ENCODE measurements at regions of chr6 and their contacts with region 1.

Region 1: DNA sequence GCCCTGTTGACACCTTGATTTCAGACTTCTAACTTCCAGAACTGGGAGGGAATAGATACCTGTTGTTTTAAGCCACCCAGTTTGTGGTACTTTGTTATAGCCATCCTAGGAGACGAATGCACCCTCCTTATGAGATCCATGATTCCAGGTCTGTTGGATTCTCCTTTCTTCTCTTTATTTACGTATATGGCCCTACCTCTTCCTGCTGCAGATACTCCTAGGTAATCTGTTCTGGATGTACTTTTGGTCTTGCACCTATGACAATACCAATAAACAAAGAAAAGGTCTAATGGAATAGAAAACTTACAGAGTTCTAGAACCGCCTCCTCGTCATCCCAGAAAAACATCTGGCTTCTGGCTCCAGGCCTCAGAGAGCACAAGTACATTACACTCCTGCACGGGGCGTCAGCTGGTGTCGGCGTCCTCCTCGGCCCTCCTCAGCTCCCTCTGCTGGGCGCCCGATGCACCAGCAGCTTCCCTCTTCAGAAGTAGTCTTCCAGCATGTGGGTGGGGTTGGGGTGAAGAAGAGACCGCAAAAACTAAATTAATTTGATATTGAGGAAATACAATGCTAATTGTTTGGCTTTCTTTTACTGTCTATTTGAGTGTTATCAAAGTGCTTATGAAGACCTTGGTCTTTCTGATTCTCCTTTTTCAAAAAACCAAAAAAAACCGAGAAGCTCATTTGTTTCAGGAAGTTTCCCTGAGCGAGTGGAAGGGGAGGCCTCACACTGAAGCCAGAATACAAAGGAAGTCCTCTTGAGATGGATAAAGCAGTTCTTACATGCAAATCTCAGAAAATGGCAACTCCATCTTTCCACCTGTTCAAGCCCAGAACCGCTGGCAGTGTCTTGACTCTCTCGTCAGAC is 9.7 kb upstream of the ATXN1 start:
- DNase-seq: peak; percentile 81
- ATAC-seq: peak; percentile 97
- H3K4me3 ChIP-seq: no peak overlapping the region
- H3K4me3 Mint-ChIP-seq: no peak overlapping the region
- H3K27ac ChIP-seq: no peak overlapping the region
- H3K27ac Mint-ChIP-seq: no peak overlapping the region
- H3K4me1 ChIP-seq: peaks cover 4 to 11% of the 10 kb centered on the region in 2 donors
- H3K4me1 Mint-ChIP-seq: peaks cover 19% of the 10 kb centered on the region
- H3K27me3 ChIP-seq: peaks cover 0 to 4% (median 0%) of the 10 kb centered on the region in 4 experiments
- H3K27me3 Mint-ChIP-seq: peaks cover 8% of the 10 kb centered on the region
- CTCF ChIP-seq: peak; percentile 97

Region 2: DNA sequence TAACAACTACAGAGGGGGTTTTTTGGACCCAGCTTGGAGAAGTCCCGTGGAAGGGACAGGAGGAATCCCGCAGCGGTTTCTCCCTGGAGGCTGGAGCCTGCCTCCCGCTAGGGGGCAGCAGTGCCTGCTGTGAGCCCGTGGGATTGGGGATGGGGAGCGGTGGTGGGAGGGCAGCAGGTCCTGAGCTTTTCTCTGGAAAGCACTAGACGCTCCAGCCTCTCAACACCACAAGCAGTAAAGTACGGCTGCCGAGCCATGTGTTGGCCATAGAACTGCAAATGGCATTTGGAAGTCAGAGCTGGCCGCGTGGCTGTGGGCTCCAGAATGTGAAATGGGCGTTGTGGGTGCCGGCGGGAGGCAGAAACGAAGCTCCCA is 484.8 kb before region 1 on chr6:
- CTCF ChIA-PET with region 1: interaction called, 11 read pairs
- POLR2A ChIA-PET with region 1: no interaction called
- intact Hi-C with region 1: no loop called
- DNase-seq: peak; percentile 22
- ATAC-seq: no peak
- H3K4me3 ChIP-seq: no peak overlapping the region
- H3K4me3 Mint-ChIP-seq: no peak overlapping the region
- H3K27ac ChIP-seq: no peak overlapping the region
- H3K27ac Mint-ChIP-seq: no peak overlapping the region
- H3K4me1 ChIP-seq: no peaks in the 10 kb centered on the region
- H3K4me1 Mint-ChIP-seq: no peaks in the 10 kb centered on the region
- H3K27me3 ChIP-seq: no peaks in the 10 kb centered on the region
- H3K27me3 Mint-ChIP-seq: peaks cover 8% of the 10 kb centered on the region
- CTCF ChIP-seq: peak; percentile 47

Region 3: DNA sequence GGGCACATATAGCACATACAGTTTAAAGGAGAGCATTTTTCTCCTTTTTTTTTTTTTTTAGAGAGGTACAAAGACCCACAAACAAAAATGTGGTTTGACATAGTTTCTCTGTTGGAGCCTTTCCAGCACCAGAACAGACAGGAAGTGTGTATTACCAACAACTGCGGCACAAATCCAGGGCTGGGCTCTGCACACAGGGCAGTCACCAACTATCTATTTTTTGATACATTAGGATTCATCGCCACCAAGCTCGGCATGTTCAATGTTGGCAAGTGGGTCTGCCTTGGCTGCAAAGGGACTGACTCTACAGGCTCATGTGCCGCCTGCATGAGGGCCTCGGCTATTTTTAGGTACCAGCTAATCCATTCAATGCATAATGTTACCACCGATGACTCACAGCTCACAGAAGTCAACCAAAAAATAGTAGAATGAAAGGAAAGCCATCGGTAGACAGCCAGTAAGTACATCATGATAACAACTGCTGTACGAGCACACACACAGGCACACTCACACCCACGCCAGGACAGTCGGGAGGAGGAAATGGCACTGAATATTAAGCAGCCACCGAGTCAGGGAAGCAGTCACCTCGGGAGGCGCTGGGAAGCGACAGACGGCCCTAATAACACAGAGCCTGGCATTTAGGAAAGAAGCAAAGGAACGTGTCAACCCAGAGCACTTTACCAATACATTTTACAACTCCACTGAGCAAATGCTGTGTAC is 451.0 kb before region 1 on chr6:
- CTCF ChIA-PET with region 1: interaction called, 20 read pairs
- POLR2A ChIA-PET with region 1: no interaction called
- intact Hi-C with region 1: no loop called
- DNase-seq: peak; percentile 52
- ATAC-seq: peak; percentile 57
- H3K4me3 ChIP-seq: peak overlapping the region in 1 of 5 experiments; percentile 33
- H3K4me3 Mint-ChIP-seq: peak overlapping the region; percentile 53
- H3K27ac ChIP-seq: peak overlapping the region; percentile 6 to 23
- H3K27ac Mint-ChIP-seq: peak overlapping the region; percentile 62
- H3K4me1 ChIP-seq: peaks cover 17 to 34% of the 10 kb centered on the region in 2 donors
- H3K4me1 Mint-ChIP-seq: peaks cover 44% of the 10 kb centered on the region
- H3K27me3 ChIP-seq: no peaks in the 10 kb centered on the region
- H3K27me3 Mint-ChIP-seq: no peaks in the 10 kb centered on the region
- CTCF ChIP-seq: no peak

Region 4: GRCh38 chr6:16338577-16339262 is 432.2 kb before region 1 on chr6:
- CTCF ChIA-PET with region 1: interaction called, 20 read pairs
- POLR2A ChIA-PET with region 1: no interaction called
- intact Hi-C with region 1: no loop called
- DNase-seq: no peak
- ATAC-seq: no peak
- H3K4me3 ChIP-seq: no peak overlapping the region
- H3K4me3 Mint-ChIP-seq: no peak overlapping the region
- H3K27ac ChIP-seq: no peak overlapping the region
- H3K27ac Mint-ChIP-seq: no peak overlapping the region
- H3K4me1 ChIP-seq: no peaks in the 10 kb centered on the region
- H3K4me1 Mint-ChIP-seq: peaks cover 6% of the 10 kb centered on the region
- H3K27me3 ChIP-seq: no peaks in the 10 kb centered on the region
- H3K27me3 Mint-ChIP-seq: no peaks in the 10 kb centered on the region
- CTCF ChIP-seq: no peak

Region 5: DNA sequence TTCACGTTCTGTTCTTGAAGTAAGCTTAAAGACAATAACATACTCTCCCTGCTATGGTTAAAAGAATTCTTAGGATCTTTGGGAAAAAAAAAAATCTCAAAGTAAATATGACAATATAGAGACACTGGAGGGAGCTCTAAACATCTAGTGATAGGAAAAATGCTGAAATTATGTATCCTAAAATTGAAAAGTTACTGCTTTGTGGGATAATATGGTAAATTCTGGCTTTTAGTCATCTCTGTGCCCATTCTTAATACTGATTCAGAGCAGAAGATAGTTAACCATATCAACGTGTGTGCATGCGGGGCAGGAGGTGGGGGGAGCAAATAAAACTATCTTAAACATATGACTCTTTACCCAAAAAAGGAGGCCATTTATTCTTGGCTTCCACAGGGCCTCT is 367.1 kb before region 1 on chr6:
- CTCF ChIA-PET with region 1: interaction called, 10 read pairs
- POLR2A ChIA-PET with region 1: no interaction called
- intact Hi-C with region 1: no loop called
- DNase-seq: no peak
- ATAC-seq: no peak
- H3K4me3 ChIP-seq: no peak overlapping the region
- H3K4me3 Mint-ChIP-seq: no peak overlapping the region
- H3K27ac ChIP-seq: no peak overlapping the region
- H3K27ac Mint-ChIP-seq: no peak overlapping the region
- H3K4me1 ChIP-seq: peaks cover 10 to 26% of the 10 kb centered on the region in 2 donors
- H3K4me1 Mint-ChIP-seq: peaks cover 38% of the 10 kb centered on the region
- H3K27me3 ChIP-seq: no peaks in the 10 kb centered on the region
- H3K27me3 Mint-ChIP-seq: no peaks in the 10 kb centered on the region
- CTCF ChIP-seq: no peak

Region 6: GRCh38 chr6:16514249-16514648 is 256.7 kb before region 1 on chr6:
- CTCF ChIA-PET with region 1: interaction called, 19 read pairs
- POLR2A ChIA-PET with region 1: no interaction called
- intact Hi-C with region 1: loop called (anchors 2 kb)
- DNase-seq: peak; percentile 42
- ATAC-seq: peak; percentile 47
- H3K4me3 ChIP-seq: no peak overlapping the region
- H3K4me3 Mint-ChIP-seq: no peak overlapping the region
- H3K27ac ChIP-seq: no peak overlapping the region
- H3K27ac Mint-ChIP-seq: peak overlapping the region; percentile 33
- H3K4me1 ChIP-seq: peaks cover 4 to 36% of the 10 kb centered on the region in 2 donors
- H3K4me1 Mint-ChIP-seq: peaks cover 42% of the 10 kb centered on the region
- H3K27me3 ChIP-seq: no peaks in the 10 kb centered on the region
- H3K27me3 Mint-ChIP-seq: no peaks in the 10 kb centered on the region
- CTCF ChIP-seq: peak; percentile 50

Region 7: GRCh38 chr6:16533721-16534136 is 237.2 kb before region 1 on chr6:
- CTCF ChIA-PET with region 1: no interaction called
- POLR2A ChIA-PET with region 1: no interaction called
- intact Hi-C with region 1: no loop called
- DNase-seq: no peak
- ATAC-seq: no peak
- H3K4me3 ChIP-seq: no peak overlapping the region
- H3K4me3 Mint-ChIP-seq: no peak overlapping the region
- H3K27ac ChIP-seq: no peak overlapping the region
- H3K27ac Mint-ChIP-seq: no peak overlapping the region
- H3K4me1 ChIP-seq: no peaks in the 10 kb centered on the region
- H3K4me1 Mint-ChIP-seq: peaks cover 8% of the 10 kb centered on the region
- H3K27me3 ChIP-seq: no peaks in the 10 kb centered on the region
- H3K27me3 Mint-ChIP-seq: no peaks in the 10 kb centered on the region
- CTCF ChIP-seq: no peak

Region 8: DNA sequence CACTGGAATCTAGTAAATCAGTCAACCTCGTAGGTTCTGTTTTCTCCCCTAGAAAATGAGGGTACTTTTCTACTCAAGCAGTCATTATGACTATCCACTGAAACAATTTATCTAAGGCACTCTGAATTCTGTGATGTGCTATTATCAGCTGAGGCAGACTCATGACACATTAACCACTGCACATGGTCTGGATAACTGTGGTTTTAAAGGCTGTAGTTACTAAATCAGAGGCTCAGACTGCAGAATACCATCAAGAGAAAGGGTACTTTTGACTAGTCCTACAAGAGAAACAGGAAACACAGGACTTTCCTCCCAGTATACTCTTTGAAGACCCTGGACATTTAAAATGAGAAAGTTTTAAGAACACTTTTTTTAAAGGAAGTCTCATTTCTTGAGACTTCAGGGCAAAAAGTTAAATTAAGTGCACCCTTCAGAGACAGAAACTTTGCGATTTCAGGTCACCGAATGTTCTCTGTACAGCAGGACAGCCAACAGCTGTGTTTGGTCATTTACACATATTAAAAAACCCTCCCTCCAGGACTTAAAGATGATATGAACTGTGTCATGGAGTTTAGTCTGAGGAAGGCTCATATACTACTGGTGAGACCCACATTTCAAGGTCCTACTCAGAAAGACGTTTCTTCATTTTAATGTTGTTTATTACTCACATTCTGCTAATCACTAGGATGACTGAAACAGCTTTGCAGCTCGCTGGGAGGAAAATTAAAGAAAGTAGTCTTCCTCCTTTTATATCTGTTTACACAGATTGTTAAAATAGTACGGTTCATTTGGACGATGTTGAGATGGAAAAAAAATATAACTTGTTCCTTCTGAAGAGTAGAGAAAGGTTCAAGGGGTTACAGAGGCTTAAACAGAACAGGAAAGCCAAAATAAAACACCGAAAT is 29.6 kb before region 1 on chr6:
- CTCF ChIA-PET with region 1: interaction called, 12 read pairs
- POLR2A ChIA-PET with region 1: no interaction called
- intact Hi-C with region 1: no loop called
- DNase-seq: no peak
- ATAC-seq: no peak
- H3K4me3 ChIP-seq: no peak overlapping the region
- H3K4me3 Mint-ChIP-seq: no peak overlapping the region
- H3K27ac ChIP-seq: no peak overlapping the region
- H3K27ac Mint-ChIP-seq: no peak overlapping the region
- H3K4me1 ChIP-seq: no peaks in the 10 kb centered on the region
- H3K4me1 Mint-ChIP-seq: peaks cover 3% of the 10 kb centered on the region
- H3K27me3 ChIP-seq: no peaks in the 10 kb centered on the region
- H3K27me3 Mint-ChIP-seq: peaks cover 5% of the 10 kb centered on the region
- CTCF ChIP-seq: no peak

Region 9: GRCh38 chr6:17086469-17086868 is 315.5 kb after region 1 on chr6:
- CTCF ChIA-PET with region 1: no interaction called
- POLR2A ChIA-PET with region 1: no interaction called
- intact Hi-C with region 1: no loop called
- DNase-seq: peak; percentile 5
- ATAC-seq: no peak
- H3K4me3 ChIP-seq: no peak overlapping the region
- H3K4me3 Mint-ChIP-seq: no peak overlapping the region
- H3K27ac ChIP-seq: no peak overlapping the region
- H3K27ac Mint-ChIP-seq: no peak overlapping the region
- H3K4me1 ChIP-seq: no peaks in the 10 kb centered on the region
- H3K4me1 Mint-ChIP-seq: no peaks in the 10 kb centered on the region
- H3K27me3 ChIP-seq: no peaks in the 10 kb centered on the region
- H3K27me3 Mint-ChIP-seq: peaks cover 7% of the 10 kb centered on the region
- CTCF ChIP-seq: peak; percentile 23